Right ventricle myocardium inferior (tissue), 1 donor: ENCODE measurements at regions of chr3 and their contacts with region 1.

Region 1: DNA sequence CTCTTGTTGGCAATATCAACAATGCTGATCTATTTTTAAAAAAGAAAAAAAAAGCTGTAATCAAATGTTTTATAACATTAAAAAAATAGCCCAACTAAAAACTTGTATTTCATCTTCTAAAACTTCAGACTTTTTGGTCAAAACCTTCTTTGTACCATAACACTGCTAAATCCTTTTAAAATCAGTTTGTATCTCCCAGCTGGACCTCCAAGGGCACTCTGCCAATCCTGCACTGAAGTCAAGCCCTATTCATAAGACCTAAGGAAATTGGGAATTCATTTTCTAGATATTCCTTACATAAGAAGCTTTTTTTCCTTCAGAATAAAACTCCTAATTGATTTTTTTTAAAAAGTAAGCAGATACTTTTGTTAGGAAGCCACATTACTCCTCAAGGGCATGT is 38.2 kb upstream of the HCLS1 start:
- DNase-seq: no peak
- ATAC-seq: peak; percentile 41

Region 2: GRCh38 chr3:121749276-121750086 is 50.6 kb after region 1 on chr3 and contains the start of gene GOLGB1:
- intact Hi-C with region 1: loop called (anchors 5 kb)
- DNase-seq: peak; percentile 95
- ATAC-seq: peak; percentile 97
- total RNA-seq, gene GOLGB1: 47.5 TPM